ENCODE measurements at regions of chr19 and their contacts with region 1.

Region 1: GRCh38 chr19:57769345-57770131 is at the start of gene ZNF586:
- DNase-seq: peak; percentile 90 to 95 (median 90)
- H3K4me3 ChIP-seq: peak within 1 kb of the TSS; percentile 64 to 82 (median 77)
- H3K4me3 Mint-ChIP-seq: peak within 1 kb of the TSS; percentile 88 to 93
- H3K27ac ChIP-seq: peak within 1 kb of the TSS; percentile 66 to 77
- H3K27ac Mint-ChIP-seq: peak within 1 kb of the TSS; percentile 70 to 93 (median 89)
- H3K4me1 ChIP-seq: peaks cover 11 to 18% of the 10 kb centered on the region in 2 donors
- H3K4me1 Mint-ChIP-seq: peaks cover 27% of the 10 kb centered on the region
- H3K27me3 ChIP-seq: no peaks in the 10 kb centered on the region
- H3K27me3 Mint-ChIP-seq: peaks cover 0 to 1% (median 0%) of the 10 kb centered on the region in 3 donors
- CTCF ChIP-seq: no peak
- polyA plus RNA-seq, gene ZNF586: 7.7 to 10.5 (median 10.2) TPM

Region 2: GRCh38 chr19:57914531-57914930 is 145.0 kb after region 1 on chr19:
- intact Hi-C with region 1: loop called in 1 of 2 experiments (anchors 10 kb)
- DNase-seq: no peak
- H3K4me3 ChIP-seq: no peak overlapping the region
- H3K4me3 Mint-ChIP-seq: no peak overlapping the region
- H3K27ac ChIP-seq: no peak overlapping the region
- H3K27ac Mint-ChIP-seq: peak overlapping the region in 1 of 7 donors; percentile 51
- H3K4me1 ChIP-seq: peaks cover 15 to 17% of the 10 kb centered on the region in 2 donors
- H3K4me1 Mint-ChIP-seq: peaks cover 21% of the 10 kb centered on the region
- H3K27me3 ChIP-seq: no peaks in the 10 kb centered on the region
- H3K27me3 Mint-ChIP-seq: peaks cover 0 to 4% (median 0%) of the 10 kb centered on the region in 3 donors
- CTCF ChIP-seq: no peak

Measured in CD14-positive monocyte (primary cell).